ENCODE measurements at regions of chr2 and their contacts with region 1.

Region 1: GRCh38 chr2:17625446-17625845 is 85.0 kb downstream of the VSNL1 start:
- DNase-seq: no peak
- ATAC-seq: no peak
- H3K4me3 ChIP-seq: no peak overlapping the region
- H3K27ac ChIP-seq: no peak overlapping the region
- H3K4me1 ChIP-seq: no peaks in the 10 kb centered on the region
- H3K27me3 ChIP-seq: no peaks in the 10 kb centered on the region
- CTCF ChIP-seq: no peak

Region 2: GRCh38 chr2:17680119-17680518 is 54.7 kb after region 1 on chr2:
- CTCF ChIA-PET with region 1: no interaction called
- POLR2A ChIA-PET with region 1: interaction called, 12 read pairs
- in situ Hi-C with region 1: no loop called
- intact Hi-C with region 1: no loop called
- DNase-seq: no peak
- ATAC-seq: no peak
- H3K4me3 ChIP-seq: no peak overlapping the region
- H3K27ac ChIP-seq: no peak overlapping the region
- H3K4me1 ChIP-seq: no peaks in the 10 kb centered on the region
- H3K27me3 ChIP-seq: no peaks in the 10 kb centered on the region
- CTCF ChIP-seq: no peak